ENCODE measurements at regions of chr2 and their contacts with region 1.

Region 1: GRCh38 chr2:165522719-165523118 is 53.2 kb downstream of the CSRNP3 start:
- H3K4me3 ChIP-seq: no peak overlapping the region
- H3K27ac ChIP-seq: no peak overlapping the region
- H3K4me1 ChIP-seq: no peaks in the 10 kb centered on the region
- CTCF ChIP-seq: no peak

Region 2: DNA sequence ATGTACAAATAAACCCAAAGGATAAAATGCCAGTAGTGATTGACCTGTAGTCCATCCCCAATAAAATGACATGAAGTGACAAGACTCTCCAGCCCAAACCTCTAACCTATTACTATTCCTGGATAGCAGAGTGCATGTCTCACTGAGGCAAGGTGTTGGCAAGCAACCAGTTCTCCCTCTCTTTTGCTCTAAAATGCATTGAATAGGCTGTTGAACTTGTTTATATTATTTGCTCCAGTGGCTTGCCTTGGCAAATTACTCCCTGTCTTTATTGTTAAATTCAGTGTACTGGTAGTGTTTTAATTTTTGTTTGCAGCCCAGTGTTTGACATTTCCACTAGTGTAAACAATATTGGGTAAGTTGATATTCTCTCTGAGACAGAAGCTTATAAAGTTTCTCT is 17.3 kb after region 1 on chr2:
- CTCF ChIA-PET with region 1: interaction called, 10 read pairs
- POLR2A ChIA-PET with region 1: no interaction called
- H3K4me3 ChIP-seq: no peak overlapping the region
- H3K27ac ChIP-seq: no peak overlapping the region
- H3K4me1 ChIP-seq: peaks cover 8% of the 10 kb centered on the region
- CTCF ChIP-seq: no peak